Activated B cell treated with CpG ODN at 0.5 μM for 24 hours (primary cell): ENCODE measurements at regions of chr9 and their contacts with region 1.

Region 1: GRCh38 chr9:112379177-112380101 is 469 bp upstream of the HSDL2 start:
- DNase-seq: peak; percentile 96
- ATAC-seq: peak; percentile 91
- H3K4me3 Mint-ChIP-seq: peak overlapping the region; percentile 99
- H3K27ac Mint-ChIP-seq: peak overlapping the region; percentile 95
- H3K4me1 Mint-ChIP-seq: peaks cover 59% of the 10 kb centered on the region
- H3K27me3 Mint-ChIP-seq: no peaks in the 10 kb centered on the region
- CTCF ChIP-seq: no peak

Region 2: DNA sequence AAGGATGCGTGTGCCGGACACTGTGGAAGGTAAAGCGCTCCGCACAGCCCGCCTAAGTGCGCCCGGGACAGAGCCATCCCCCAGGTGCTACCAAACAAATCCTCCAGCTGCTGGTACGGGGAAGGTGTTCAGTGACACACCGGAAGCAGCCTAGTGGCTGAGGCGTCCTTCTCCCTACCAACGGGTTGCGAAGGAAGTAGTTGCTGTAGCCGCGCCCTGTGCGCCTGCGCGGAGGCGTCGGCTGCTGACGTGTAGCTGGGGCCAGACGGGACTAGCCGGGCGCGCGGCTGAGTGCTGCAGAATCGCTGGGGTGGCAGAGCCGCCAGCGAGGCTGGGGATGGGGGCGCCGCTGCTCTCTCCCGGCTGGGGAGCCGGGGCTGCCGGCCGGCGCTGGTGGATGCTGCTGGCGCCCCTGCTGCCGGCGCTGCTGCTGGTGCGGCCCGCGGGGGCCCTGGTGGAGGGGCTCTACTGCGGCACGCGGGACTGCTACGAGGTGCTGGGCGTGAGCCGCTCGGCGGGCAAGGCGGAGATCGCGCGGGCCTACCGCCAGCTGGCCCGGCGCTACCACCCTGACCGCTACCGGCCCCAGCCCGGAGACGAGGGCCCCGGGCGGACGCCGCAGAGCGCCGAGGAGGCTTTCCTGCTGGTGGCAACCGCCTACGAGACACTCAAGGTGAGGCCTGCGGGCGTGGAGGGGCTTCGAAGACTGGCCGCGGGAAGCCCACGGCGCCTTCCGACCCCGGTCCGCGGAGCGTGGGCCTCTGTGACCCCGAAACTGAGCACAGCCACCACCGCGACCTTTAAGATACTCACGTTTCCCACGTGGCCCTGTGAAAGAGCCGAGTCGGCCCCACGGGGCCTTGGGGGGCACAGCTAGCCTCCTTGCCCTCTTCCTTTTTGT is 748.1 kb before region 1 on chr9 and contains the start of gene DNAJC25:
- CTCF ChIA-PET with region 1: no interaction called
- POLR2A ChIA-PET with region 1: interaction called, 9 read pairs
- intact Hi-C with region 1: loop called (anchors 1 kb)
- DNase-seq: peak; percentile 91
- ATAC-seq: peak; percentile 94
- H3K4me3 Mint-ChIP-seq: peak within 1 kb of the TSS; percentile 95
- H3K27ac Mint-ChIP-seq: peak within 1 kb of the TSS; percentile 89
- H3K4me1 Mint-ChIP-seq: peaks cover 29% of the 10 kb centered on the region
- H3K27me3 Mint-ChIP-seq: no peaks in the 10 kb centered on the region
- CTCF ChIP-seq: no peak
- total RNA-seq, gene DNAJC25: 3.5 and 4.3 TPM in 2 replicates

Region 3: GRCh38 chr9:112361601-112362000 is 17.8 kb before region 1 on chr9:
- CTCF ChIA-PET with region 1: interaction called, 6 read pairs
- POLR2A ChIA-PET with region 1: interaction called, 4 read pairs
- intact Hi-C with region 1: loop called (anchors 1 kb)
- DNase-seq: no peak
- ATAC-seq: peak; percentile 40
- H3K4me3 Mint-ChIP-seq: peak overlapping the region; percentile 41
- H3K27ac Mint-ChIP-seq: no peak overlapping the region
- H3K4me1 Mint-ChIP-seq: peaks cover 2% of the 10 kb centered on the region
- H3K27me3 Mint-ChIP-seq: no peaks in the 10 kb centered on the region
- CTCF ChIP-seq: peak; percentile 59

Region 4: DNA sequence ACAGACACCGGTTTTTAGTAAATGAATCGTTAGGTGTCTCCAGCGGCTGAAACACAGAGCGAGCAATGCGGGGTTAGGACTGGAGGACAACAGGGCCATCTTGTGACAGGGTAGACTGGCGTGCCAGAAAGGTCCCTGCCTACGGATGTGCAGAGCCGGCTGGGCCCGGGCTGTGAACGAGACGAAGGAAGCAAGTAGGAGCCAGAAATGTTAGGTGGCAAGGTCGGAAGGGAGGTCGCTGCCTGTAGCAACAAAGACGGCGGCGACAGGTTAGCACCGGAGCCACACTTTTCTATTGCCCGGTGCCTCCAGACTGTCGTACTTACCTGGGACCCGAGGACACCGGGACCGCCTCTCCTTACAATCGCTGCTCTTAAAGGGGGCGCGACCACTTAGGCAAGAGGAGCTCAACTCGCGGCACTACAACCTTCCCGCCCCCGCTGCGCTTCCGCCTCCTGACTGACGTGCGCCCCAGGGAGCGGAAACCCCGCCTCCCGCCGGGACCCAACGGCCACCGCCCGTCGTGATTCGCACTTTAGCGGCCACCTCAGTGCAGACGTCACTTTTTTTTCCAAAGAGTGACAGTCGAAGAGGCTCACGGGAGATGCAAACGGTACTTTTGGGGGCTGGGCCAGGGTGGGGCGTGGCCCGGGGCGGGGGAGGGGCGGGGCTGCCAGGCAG is 338.4 kb after region 1 on chr9 and contains the start of gene INIP:
- CTCF ChIA-PET with region 1: no interaction called
- POLR2A ChIA-PET with region 1: interaction called, 18 read pairs
- intact Hi-C with region 1: loop called (anchors 1 kb)
- DNase-seq: peak; percentile 95
- ATAC-seq: peak; percentile 93
- H3K4me3 Mint-ChIP-seq: peak within 1 kb of the TSS; percentile 100
- H3K27ac Mint-ChIP-seq: peak within 1 kb of the TSS; percentile 98
- H3K4me1 Mint-ChIP-seq: peaks cover 19% of the 10 kb centered on the region
- H3K27me3 Mint-ChIP-seq: no peaks in the 10 kb centered on the region
- CTCF ChIP-seq: no peak
- total RNA-seq, gene INIP: 31.1 and 32.1 TPM in 2 replicates

Region 5: GRCh38 chr9:112809351-112809848 is 430.0 kb after region 1 on chr9:
- CTCF ChIA-PET with region 1: no interaction called
- POLR2A ChIA-PET with region 1: interaction called, 11 read pairs
- intact Hi-C with region 1: loop called (anchors 1 kb)
- DNase-seq: no peak
- ATAC-seq: peak; percentile 93
- H3K4me3 Mint-ChIP-seq: no peak overlapping the region
- H3K27ac Mint-ChIP-seq: no peak overlapping the region
- H3K4me1 Mint-ChIP-seq: peaks cover 23% of the 10 kb centered on the region
- H3K27me3 Mint-ChIP-seq: peaks cover 10% of the 10 kb centered on the region
- CTCF ChIP-seq: no peak